PC-9 (cell line): ENCODE measurements at regions of chr18 and their contacts with region 1.

Region 1: GRCh38 chr18:22563098-22563707 is 145.5 kb upstream of the CTAGE1 start:
- DNase-seq: peak; percentile 28 to 68
- H3K4me3 ChIP-seq: 0 out of 2 replicates have a peak overlapping the region, but pooled peaks have one; percentile 1
- H3K27ac ChIP-seq: no peak overlapping the region; the same call in 1 of the 2 replicates
- H3K4me1 ChIP-seq: peaks cover 25% of the 10 kb centered on the region
- H3K27me3 ChIP-seq: no peaks in the 10 kb centered on the region
- CTCF ChIP-seq: peak; percentile 80

Region 2: DNA sequence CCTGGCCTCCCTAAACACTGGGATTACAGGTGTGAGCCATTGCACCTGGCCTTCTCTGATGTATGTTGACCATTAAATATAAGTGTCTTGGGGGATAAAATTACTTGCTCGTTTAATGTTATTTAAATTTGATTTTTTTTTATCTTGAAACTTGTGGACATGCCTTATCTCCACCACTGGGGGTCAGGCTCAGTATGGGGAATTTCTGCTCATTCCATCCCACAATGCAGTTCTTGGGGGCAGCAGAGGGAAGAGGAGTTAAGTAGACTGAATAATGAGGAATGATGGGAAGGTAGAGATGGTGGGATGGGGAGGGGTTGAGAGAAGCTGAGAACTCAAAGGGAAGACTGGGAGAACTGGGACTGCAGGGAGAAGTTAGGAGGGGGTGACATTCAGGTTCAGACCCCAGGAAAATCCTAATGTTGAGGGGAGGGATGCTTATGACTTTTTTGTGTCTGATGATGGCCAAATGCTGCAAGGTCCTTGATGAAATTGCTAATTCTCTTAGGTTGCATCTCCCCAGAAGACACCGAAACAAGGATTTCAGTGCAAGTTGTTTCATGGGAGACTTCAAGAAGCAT is 648.4 kb before region 1 on chr18:
- CTCF ChIA-PET with region 1: interaction called, 3 read pairs
- POLR2A ChIA-PET with region 1: no interaction called
- intact Hi-C with region 1: loop called (anchors 1 kb)
- DNase-seq: peak in 1 of 2 experiments; percentile 15
- H3K4me3 ChIP-seq: no peak overlapping the region
- H3K27ac ChIP-seq: no peak overlapping the region
- H3K4me1 ChIP-seq: no peaks in the 10 kb centered on the region
- H3K27me3 ChIP-seq: no peaks in the 10 kb centered on the region
- CTCF ChIP-seq: peak; percentile 78

Region 3: DNA sequence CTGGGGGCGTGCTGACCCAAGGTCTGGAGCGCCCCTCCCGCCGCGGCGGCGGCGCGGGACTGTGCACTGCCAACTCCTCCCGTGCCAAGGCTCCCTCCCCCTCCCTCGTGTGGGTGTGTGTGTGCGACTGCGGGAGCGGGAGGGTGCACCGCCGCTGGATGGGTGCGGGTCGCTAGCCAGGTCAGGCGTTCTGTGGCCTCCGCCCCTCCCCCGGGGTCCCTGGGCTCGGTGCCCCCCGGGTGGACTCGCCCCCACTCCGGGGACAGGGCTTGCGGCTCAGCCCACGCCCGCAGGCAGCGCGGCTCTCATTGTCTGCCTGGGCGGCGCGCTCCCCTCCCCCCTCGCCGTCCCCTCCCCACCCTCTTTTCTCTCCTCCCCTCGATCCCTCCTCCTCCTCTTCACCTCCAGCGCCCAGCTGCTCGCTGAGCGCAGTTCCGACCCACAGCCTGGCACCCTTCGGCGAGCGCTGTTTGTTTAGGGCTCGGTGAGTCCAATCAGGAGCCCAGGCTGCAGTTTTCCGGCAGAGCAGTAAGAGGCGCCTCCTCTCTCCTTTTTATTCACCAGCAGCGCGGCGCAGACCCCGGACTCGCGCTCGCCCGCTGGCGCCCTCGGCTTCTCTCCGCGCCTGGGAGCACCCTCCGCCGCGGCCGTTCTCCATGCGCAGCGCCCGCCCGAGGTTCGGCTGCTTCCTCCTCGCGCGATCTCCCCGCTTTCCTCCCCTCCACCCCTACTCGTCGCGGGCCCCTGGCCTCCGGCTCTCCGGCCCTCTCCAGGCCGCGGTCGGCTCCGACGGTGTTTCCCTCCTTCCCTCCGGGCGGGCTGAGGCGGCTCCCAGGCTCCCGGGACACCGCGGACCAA is 394.0 kb before region 1 on chr18 and contains the start of gene GATA6:
- CTCF ChIA-PET with region 1: no interaction called
- POLR2A ChIA-PET with region 1: no interaction called
- intact Hi-C with region 1: loop called (anchors 1 kb)
- DNase-seq: peak; percentile 77 to 84
- H3K4me3 ChIP-seq: peak within 1 kb of the TSS; percentile 73
- H3K27ac ChIP-seq: peak within 1 kb of the TSS; percentile 74
- H3K4me1 ChIP-seq: peaks cover 22% of the 10 kb centered on the region
- H3K27me3 ChIP-seq: no peaks in the 10 kb centered on the region
- CTCF ChIP-seq: peak; percentile 45; the same call in 1 of the 2 replicates
- total RNA-seq, gene GATA6: 9.1 and 12.3 TPM in 2 replicates

Region 4: GRCh38 chr18:22314420-22314819 is 248.8 kb before region 1 on chr18:
- CTCF ChIA-PET with region 1: no interaction called
- POLR2A ChIA-PET with region 1: no interaction called
- intact Hi-C with region 1: no loop called
- DNase-seq: no peak
- H3K4me3 ChIP-seq: no peak overlapping the region
- H3K27ac ChIP-seq: no peak overlapping the region
- H3K4me1 ChIP-seq: no peaks in the 10 kb centered on the region
- H3K27me3 ChIP-seq: no peaks in the 10 kb centered on the region
- CTCF ChIP-seq: no peak

Region 5: DNA sequence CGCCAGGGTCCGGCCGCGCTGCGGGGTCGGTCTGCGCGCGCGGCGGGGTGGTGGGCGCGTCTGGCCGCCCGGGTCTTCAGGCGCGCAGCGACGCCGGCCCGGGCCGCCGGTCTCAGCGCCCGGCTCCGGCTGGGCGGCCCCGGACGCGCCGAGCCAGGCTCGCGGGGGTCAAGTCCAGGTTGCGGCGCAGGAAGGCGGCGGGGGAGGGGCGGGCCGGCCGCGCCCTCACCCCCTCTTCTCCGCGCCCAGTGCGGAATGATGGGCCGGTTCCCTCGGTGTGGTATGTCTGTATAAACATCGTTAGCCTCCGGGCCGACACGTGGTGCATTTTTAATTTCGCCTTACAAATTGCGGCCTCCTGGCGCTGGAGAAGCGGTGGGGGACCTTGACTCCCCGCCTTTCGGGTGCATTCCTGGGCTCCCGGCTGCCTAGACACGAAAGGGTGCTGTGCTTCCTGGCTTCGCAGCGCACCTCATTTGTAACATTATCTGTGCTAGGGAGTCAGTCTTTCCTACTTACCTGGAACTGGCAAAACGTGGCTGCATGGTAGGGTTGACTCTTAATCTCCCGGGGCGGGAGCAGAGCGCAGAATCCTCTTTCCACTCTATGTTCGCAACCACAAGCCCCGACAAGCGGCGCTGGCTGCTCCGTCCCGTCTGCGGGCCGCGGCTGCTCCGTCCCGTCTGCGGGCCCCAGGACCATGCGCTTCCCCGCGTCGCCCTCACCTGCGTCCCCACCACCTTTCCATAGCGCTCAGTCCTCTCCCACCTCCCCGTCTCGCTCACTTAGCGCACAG is 214.5 kb before region 1 on chr18:
- CTCF ChIA-PET with region 1: no interaction called
- POLR2A ChIA-PET with region 1: no interaction called
- intact Hi-C with region 1: loop called (anchors 2 kb)
- DNase-seq: peak; percentile 81
- H3K4me3 ChIP-seq: peak overlapping the region; percentile 60
- H3K27ac ChIP-seq: peak overlapping the region; percentile 87
- H3K4me1 ChIP-seq: peaks cover 40% of the 10 kb centered on the region
- H3K27me3 ChIP-seq: no peaks in the 10 kb centered on the region
- CTCF ChIP-seq: no peak

Region 6: GRCh38 chr18:22667616-22668422 is 104.6 kb after region 1 on chr18:
- CTCF ChIA-PET with region 1: no interaction called
- POLR2A ChIA-PET with region 1: interaction called, 6 read pairs
- intact Hi-C with region 1: loop called (anchors 10 kb)
- DNase-seq: peak; percentile 53 to 82
- H3K4me3 ChIP-seq: no peak overlapping the region
- H3K27ac ChIP-seq: peak overlapping the region; percentile 60
- H3K4me1 ChIP-seq: peaks cover 17% of the 10 kb centered on the region
- H3K27me3 ChIP-seq: no peaks in the 10 kb centered on the region
- CTCF ChIP-seq: no peak

Region 7: DNA sequence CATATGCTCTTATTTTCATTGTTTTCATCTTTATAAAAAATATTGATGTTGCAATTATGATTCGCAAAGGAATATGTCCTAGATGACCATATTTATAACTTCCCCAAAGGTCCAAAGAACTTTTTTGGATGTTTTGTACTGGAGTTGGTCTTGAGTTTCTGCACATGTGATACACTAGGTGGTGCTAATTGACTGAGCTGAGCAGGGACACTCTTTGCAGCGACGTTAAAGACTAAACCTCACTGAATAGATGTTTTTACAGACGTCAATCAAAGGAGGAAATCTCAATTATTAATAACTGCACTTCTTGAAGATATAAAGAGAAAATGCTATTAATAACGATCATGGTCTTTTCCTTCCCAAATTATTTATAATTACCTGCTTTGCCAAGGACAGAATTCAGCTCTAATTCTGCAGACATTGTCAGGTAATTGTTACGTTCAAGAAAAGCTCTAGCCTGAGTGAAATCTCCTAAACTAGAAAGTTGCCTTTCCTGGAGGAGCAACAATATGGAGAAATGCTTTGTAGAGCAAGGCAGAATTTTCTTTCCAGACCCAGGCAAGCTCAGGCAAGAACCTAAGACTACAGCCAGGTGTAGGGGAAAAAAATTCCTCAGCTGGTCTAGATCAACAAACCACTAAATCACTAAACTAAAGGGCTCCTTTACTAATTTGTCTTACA is 250.6 kb after region 1 on chr18:
- CTCF ChIA-PET with region 1: no interaction called
- POLR2A ChIA-PET with region 1: no interaction called
- intact Hi-C with region 1: no loop called
- DNase-seq: peak in 1 of 2 experiments; percentile 39
- H3K4me3 ChIP-seq: no peak overlapping the region
- H3K27ac ChIP-seq: no peak overlapping the region
- H3K4me1 ChIP-seq: 0 out of 2 replicates have a peak, but pooled peaks cover 5% of the 10 kb centered on the region
- H3K27me3 ChIP-seq: no peaks in the 10 kb centered on the region
- CTCF ChIP-seq: peak; percentile 72